WTC11 (cell line): ENCODE measurements at regions of chr20 and their contacts with region 1.

Region 1: GRCh38 chr20:48657475-48658470 is 170.0 kb downstream of the PREX1 start:
- DNase-seq: peak; percentile 65
- ATAC-seq: peak; percentile 85
- H3K4me3 Mint-ChIP-seq: no peak overlapping the region
- H3K27ac Mint-ChIP-seq: no peak overlapping the region; the same call in 1 of the 2 replicates
- H3K4me1 Mint-ChIP-seq: 0 out of 2 replicates have a peak, but pooled peaks cover 4% of the 10 kb centered on the region
- H3K27me3 Mint-ChIP-seq: no peaks in the 10 kb centered on the region
- CTCF ChIP-seq: peak; percentile 94

Region 2: DNA sequence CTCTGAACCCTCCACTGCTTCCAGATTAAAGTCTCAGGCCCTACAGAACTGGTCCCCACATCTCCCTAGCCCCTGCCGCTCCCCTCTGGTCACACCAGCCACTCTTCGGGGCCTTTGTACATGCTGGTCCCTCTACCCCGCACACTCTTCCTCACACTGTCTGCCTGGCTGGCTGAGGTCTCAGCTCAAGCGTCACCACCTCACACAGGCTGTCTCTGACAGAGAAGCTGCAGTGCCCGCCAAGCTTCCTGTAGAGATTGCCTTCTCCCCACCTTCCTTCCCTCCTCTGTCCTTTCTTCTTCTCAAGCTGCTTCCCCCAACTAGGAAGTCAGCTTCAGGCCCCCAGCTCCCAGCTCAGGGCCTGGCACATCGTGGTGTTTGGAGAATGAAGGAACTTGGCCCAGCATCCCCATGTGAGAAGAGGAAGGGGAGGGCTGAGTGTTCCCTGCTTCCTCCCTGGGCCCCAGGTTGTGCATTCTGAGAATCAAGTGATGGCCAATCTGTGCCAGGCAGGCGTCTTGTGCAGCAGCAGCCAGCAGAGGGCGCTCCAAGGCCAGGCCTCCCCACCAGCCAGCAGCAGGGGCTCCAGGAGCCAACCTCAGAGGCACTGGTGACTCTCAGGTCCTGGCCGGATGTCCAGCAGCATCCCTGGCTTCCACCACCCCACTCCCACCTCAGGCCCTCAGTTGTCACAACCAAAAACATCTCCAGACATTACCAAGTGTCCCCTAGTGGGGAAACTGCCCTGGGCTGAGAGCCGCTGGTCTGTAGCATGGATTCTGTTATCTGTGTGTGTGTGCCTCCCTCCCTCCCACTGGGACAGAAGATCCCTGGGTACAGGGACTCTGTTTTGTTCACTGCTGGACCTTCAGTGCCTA is 22.1 kb before region 1 on chr20:
- CTCF ChIA-PET with region 1: interaction called, 10 read pairs
- POLR2A ChIA-PET with region 1: no interaction called
- DNase-seq: peak; percentile 90
- ATAC-seq: peak; percentile 89
- H3K4me3 Mint-ChIP-seq: no peak overlapping the region
- H3K27ac Mint-ChIP-seq: no peak overlapping the region
- H3K4me1 Mint-ChIP-seq: peaks cover 3% of the 10 kb centered on the region; the same call in 1 of the 2 replicates
- H3K27me3 Mint-ChIP-seq: no peaks in the 10 kb centered on the region
- CTCF ChIP-seq: peak; percentile 93

Region 3: DNA sequence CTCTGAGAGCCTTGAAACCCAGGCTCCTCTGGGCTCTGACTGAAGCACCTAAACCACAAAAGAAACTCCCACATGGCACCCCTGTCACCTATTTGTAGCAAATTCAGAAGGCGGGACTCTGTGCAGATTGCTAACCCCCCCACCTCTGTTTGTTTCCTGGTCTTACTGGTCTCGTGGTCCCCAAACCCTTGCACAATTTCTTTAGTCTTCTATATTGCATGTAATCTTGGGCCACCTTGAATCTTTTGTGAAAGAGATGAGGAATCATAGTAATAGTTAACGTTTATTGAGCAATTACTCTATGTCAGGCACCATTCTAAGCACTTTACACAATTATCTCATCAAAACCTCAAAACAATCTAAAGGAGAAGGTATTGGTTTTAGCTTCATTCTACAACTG is 15.8 kb after region 1 on chr20:
- CTCF ChIA-PET with region 1: interaction called, 24 read pairs
- POLR2A ChIA-PET with region 1: no interaction called
- DNase-seq: no peak
- ATAC-seq: no peak
- H3K4me3 Mint-ChIP-seq: no peak overlapping the region
- H3K27ac Mint-ChIP-seq: no peak overlapping the region
- H3K4me1 Mint-ChIP-seq: no peaks in the 10 kb centered on the region
- H3K27me3 Mint-ChIP-seq: no peaks in the 10 kb centered on the region
- CTCF ChIP-seq: no peak

Region 4: DNA sequence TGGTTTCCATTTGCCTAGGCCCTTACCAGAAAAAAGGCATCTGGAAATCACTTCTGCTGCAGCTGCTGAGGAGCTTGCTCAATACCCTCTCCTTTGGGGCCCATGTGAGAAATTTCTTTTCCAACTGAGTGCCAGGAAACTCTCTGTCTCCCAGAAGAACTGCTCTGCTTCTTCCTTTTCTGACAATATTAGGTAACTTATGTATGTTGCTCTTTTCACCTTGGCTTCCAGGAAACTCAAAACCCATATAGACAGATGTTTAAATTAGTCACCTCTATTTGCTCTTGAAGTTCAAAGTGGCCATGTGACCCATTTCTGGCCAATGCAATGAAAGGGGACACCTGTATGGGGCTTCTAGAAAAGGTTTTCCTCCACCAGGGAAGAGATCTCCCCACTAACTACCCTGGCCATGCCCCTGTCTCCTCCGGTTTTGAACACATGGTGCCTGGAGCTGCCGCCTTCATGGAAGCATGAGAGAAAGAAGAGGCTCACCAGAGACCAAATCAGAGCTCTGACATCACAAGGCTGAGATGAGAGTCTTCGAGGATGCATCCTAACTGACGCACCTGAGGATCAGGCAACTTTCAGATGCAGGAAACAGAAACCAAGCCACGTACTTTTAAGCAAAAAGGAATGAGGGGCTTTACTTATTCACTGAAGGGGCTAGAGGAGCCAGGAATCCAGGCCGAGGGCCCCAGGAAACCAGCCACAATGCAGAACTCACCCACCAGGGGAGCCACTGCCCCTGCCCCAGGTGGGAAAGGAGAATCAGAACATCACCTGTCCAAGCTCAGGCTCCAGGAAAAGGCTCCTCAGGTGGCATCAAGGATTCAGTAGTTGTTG is 48.6 kb after region 1 on chr20:
- CTCF ChIA-PET with region 1: interaction called, 97 read pairs
- POLR2A ChIA-PET with region 1: no interaction called
- DNase-seq: no peak
- ATAC-seq: no peak
- H3K4me3 Mint-ChIP-seq: no peak overlapping the region
- H3K27ac Mint-ChIP-seq: no peak overlapping the region; the same call in 1 of the 2 replicates
- H3K4me1 Mint-ChIP-seq: peaks cover 6% of the 10 kb centered on the region; the same call in 1 of the 2 replicates
- H3K27me3 Mint-ChIP-seq: no peaks in the 10 kb centered on the region
- CTCF ChIP-seq: peak; percentile 20; the same call in 1 of the 2 replicates

Region 5: GRCh38 chr20:48787861-48788375 is 130.1 kb after region 1 on chr20:
- CTCF ChIA-PET with region 1: interaction called, 10 read pairs
- POLR2A ChIA-PET with region 1: no interaction called
- DNase-seq: no peak
- ATAC-seq: no peak
- H3K4me3 Mint-ChIP-seq: no peak overlapping the region
- H3K27ac Mint-ChIP-seq: no peak overlapping the region
- H3K4me1 Mint-ChIP-seq: peaks cover 22% of the 10 kb centered on the region
- H3K27me3 Mint-ChIP-seq: no peaks in the 10 kb centered on the region
- CTCF ChIP-seq: no peak

Region 6: DNA sequence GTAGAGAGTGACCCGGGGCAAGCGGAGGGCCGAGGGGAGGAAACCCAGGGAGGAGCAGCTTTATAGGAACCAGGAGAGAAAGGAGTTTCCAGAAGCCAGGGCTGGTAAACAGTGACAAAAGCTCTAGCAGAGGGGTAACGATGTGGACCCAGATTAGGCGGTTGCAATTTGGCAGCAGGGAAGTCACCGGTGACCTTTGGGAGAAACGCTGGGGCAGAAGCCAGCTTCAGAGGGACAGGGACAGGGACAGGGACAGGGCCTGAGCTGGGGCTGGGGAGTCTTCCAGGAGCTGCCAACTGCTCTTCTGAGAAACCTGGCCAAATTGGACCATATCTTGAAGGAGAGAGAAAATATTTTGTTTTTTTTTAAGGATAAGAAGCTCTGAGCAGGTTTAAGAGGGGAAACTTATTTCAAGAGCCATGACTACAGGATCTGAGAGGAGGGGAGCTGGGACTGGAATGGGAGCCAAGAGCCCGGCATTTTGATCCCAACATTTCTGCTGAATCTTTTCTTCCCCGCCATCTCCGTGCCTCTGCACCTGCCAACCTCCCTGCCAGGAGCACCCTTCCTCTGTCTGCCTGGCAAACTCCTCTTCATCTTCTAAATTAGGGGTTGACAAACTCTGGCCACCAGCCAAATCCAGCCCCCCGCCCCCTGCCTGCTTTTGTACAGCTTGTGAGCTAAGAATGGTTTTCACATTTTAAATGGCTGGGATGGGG is 192.6 kb after region 1 on chr20:
- CTCF ChIA-PET with region 1: interaction called, 15 read pairs
- POLR2A ChIA-PET with region 1: no interaction called
- DNase-seq: no peak
- ATAC-seq: no peak
- H3K4me3 Mint-ChIP-seq: no peak overlapping the region
- H3K27ac Mint-ChIP-seq: no peak overlapping the region
- H3K4me1 Mint-ChIP-seq: peaks cover 19% of the 10 kb centered on the region
- H3K27me3 Mint-ChIP-seq: no peaks in the 10 kb centered on the region
- CTCF ChIP-seq: no peak

Region 7: GRCh38 chr20:48904365-48905296 is 246.9 kb after region 1 on chr20:
- CTCF ChIA-PET with region 1: interaction called, 153 read pairs
- POLR2A ChIA-PET with region 1: no interaction called
- DNase-seq: peak; percentile 70
- ATAC-seq: peak; percentile 88
- H3K4me3 Mint-ChIP-seq: peak overlapping the region; percentile 54
- H3K27ac Mint-ChIP-seq: no peak overlapping the region; the same call in 1 of the 2 replicates
- H3K4me1 Mint-ChIP-seq: peaks cover 7% of the 10 kb centered on the region
- H3K27me3 Mint-ChIP-seq: no peaks in the 10 kb centered on the region
- CTCF ChIP-seq: peak; percentile 81